Activated naive CD4-positive, alpha-beta T cell treated with anti-CD3 and anti-CD28 coated beads, Interleukin-2, amount 10 ng/mL, durations not matched to agents 7 days and 5 days (primary cell): ENCODE measurements at regions of chr1 and their contacts with region 1.

Region 1: DNA sequence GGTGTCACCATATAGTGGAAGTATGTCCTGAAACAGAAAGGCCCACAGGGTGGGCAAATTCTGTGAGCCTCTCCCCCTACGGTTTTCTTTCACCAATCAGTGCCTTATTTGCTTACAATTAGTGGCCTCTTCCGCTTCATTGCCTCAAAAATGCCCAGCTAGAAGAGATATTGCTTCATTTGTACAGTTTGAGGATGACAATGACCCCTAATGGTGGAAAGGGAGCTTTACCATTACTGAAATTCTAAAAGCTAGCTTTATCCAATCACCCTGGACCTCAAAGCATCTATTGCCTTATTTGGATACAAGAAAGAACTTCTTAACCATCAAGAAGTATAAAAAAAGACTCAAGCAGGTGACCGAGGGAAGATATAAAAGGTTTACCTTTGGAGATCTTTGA is 49.6 kb downstream of the LRRC71 start:
- DNase-seq: no peak
- H3K4me3 Mint-ChIP-seq: no peak overlapping the region
- H3K27ac Mint-ChIP-seq: no peak overlapping the region
- H3K4me1 Mint-ChIP-seq: no peaks in the 10 kb centered on the region
- H3K27me3 Mint-ChIP-seq: peaks cover 67% of the 10 kb centered on the region

Region 2: DNA sequence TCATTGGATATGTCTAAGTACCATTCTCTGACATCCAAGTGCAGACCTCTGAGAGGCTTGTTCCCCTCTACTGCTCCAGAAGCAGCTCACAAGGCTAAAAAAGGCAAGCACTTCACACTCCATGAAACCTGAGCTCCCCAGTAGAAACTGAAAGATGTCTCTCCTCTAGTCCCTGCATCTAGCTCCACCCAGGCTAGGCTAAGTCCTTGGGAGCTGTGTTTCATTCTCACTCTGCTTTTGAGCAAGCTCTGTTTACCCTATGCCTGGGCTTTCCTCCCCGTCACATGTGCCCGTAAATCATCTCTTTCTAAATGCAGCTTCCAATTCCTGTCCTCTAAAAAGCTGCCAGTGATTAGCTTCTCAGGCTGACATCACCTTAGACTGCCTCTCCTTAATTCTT is 10.6 kb before region 1 on chr1:
- CTCF ChIA-PET with region 1: interaction called, 15 read pairs
- DNase-seq: no peak
- H3K4me3 Mint-ChIP-seq: no peak overlapping the region
- H3K27ac Mint-ChIP-seq: no peak overlapping the region
- H3K4me1 Mint-ChIP-seq: peaks cover 47% of the 10 kb centered on the region
- H3K27me3 Mint-ChIP-seq: no peaks in the 10 kb centered on the region